Endothelial cell of umbilical vein (primary cell): ENCODE measurements at regions of chr16 and their contacts with region 1.

Region 1: GRCh38 chr16:86823895-86824671 is 245.7 kb downstream of the FOXL1 start:
- DNase-seq: peak; percentile 87
- H3K4me3 ChIP-seq: peak overlapping the region in 1 of 3 experiments; percentile 7
- H3K27ac ChIP-seq: peak overlapping the region; percentile 93
- H3K4me1 ChIP-seq: peaks cover 50% of the 10 kb centered on the region
- H3K27me3 ChIP-seq: no peaks in the 10 kb centered on the region
- CTCF ChIP-seq: no peak
- POLR2A ChIP-seq: peak; percentile 50

Region 2: GRCh38 chr16:86653285-86654006 is 170.6 kb before region 1 on chr16:
- CTCF ChIA-PET with region 1: no interaction called
- POLR2A ChIA-PET with region 1: no interaction called
- dilution Hi-C with region 1: no loop called
- intact Hi-C with region 1: no loop called
- DNase-seq: no peak
- H3K4me3 ChIP-seq: no peak overlapping the region
- H3K27ac ChIP-seq: no peak overlapping the region
- H3K4me1 ChIP-seq: no peaks in the 10 kb centered on the region
- H3K27me3 ChIP-seq: no peaks in the 10 kb centered on the region
- CTCF ChIP-seq: no peak
- POLR2A ChIP-seq: no peak

Region 3: DNA sequence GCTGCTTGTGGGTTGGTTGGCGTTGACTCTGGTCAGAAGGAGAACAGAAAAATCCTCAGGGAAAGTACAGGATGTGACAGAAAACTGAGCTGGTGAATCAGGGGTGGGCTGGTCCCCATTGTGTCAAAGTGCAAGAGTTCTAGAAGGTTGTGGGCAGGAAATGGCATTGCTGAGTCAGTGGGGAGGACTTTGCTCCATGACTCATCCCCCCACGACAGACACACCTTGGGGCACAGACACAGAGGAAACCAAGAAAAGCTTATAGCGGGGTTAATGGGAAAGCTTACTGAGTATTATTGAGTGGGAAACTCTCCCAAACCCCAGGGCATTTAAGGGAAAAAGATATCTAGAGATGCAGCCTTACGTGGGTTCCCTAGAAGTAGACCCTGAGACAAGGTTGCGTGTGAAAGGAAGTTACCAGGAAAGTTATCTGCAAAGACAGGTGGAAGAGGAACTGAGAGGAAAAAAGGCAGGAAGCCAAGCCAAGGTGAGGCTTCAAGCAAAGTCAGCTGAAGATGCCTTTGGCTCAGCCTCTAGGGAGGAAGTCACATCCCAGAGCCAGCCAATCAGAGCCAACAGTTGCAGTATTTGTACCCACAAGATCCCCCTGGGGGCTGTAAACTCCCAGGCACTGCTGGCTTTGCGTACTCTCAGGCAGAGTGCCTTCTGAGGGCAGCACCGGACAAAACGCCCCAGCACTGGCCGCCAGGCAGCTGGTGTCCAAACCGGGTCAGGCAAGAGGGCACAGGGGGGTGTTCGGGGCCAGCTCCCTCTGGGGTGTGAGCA is 159.4 kb before region 1 on chr16:
- CTCF ChIA-PET with region 1: no interaction called
- POLR2A ChIA-PET with region 1: no interaction called
- dilution Hi-C with region 1: no loop called
- intact Hi-C with region 1: loop called (anchors 1 kb)
- DNase-seq: peak; percentile 94
- H3K4me3 ChIP-seq: no peak overlapping the region
- H3K27ac ChIP-seq: peak overlapping the region; percentile 95
- H3K4me1 ChIP-seq: peaks cover 60% of the 10 kb centered on the region
- H3K27me3 ChIP-seq: no peaks in the 10 kb centered on the region
- CTCF ChIP-seq: no peak
- POLR2A ChIP-seq: no peak

Region 4: GRCh38 chr16:86740906-86741799 is 82.9 kb before region 1 on chr16:
- CTCF ChIA-PET with region 1: no interaction called
- POLR2A ChIA-PET with region 1: no interaction called
- dilution Hi-C with region 1: no loop called
- intact Hi-C with region 1: loop called (anchors 1 kb)
- DNase-seq: peak; percentile 92
- H3K4me3 ChIP-seq: peak overlapping the region in 2 of 3 experiments; percentile 15 to 31
- H3K27ac ChIP-seq: peak overlapping the region; percentile 96
- H3K4me1 ChIP-seq: peaks cover 19% of the 10 kb centered on the region
- H3K27me3 ChIP-seq: no peaks in the 10 kb centered on the region
- CTCF ChIP-seq: no peak
- POLR2A ChIP-seq: peak; percentile 75

Region 5: GRCh38 chr16:86761111-86762031 is 62.7 kb before region 1 on chr16:
- CTCF ChIA-PET with region 1: interaction called, 6 read pairs
- POLR2A ChIA-PET with region 1: no interaction called
- dilution Hi-C with region 1: no loop called
- intact Hi-C with region 1: loop called (anchors 5 kb)
- DNase-seq: peak; percentile 72
- H3K4me3 ChIP-seq: no peak overlapping the region
- H3K27ac ChIP-seq: no peak overlapping the region
- H3K4me1 ChIP-seq: peaks cover 13% of the 10 kb centered on the region
- H3K27me3 ChIP-seq: peaks cover 0 to 8% of the 10 kb centered on the region in 2 experiments
- CTCF ChIP-seq: peak; percentile 91 to 96
- POLR2A ChIP-seq: no peak

Region 6: GRCh38 chr16:86797700-86798099 is 26.4 kb before region 1 on chr16:
- CTCF ChIA-PET with region 1: no interaction called
- POLR2A ChIA-PET with region 1: no interaction called
- dilution Hi-C with region 1: no loop called
- intact Hi-C with region 1: loop called (anchors 2 kb)
- DNase-seq: no peak
- H3K4me3 ChIP-seq: no peak overlapping the region
- H3K27ac ChIP-seq: no peak overlapping the region
- H3K4me1 ChIP-seq: peaks cover 12% of the 10 kb centered on the region
- H3K27me3 ChIP-seq: peaks cover 4 to 10% of the 10 kb centered on the region in 2 experiments
- CTCF ChIP-seq: no peak
- POLR2A ChIP-seq: no peak

Region 7: GRCh38 chr16:86834451-86835035 is 10.5 kb after region 1 on chr16:
- CTCF ChIA-PET with region 1: interaction called, 4 read pairs
- POLR2A ChIA-PET with region 1: no interaction called
- dilution Hi-C with region 1: no loop called
- intact Hi-C with region 1: loop called (anchors 1 kb)
- DNase-seq: peak; percentile 41
- H3K4me3 ChIP-seq: no peak overlapping the region
- H3K27ac ChIP-seq: no peak overlapping the region
- H3K4me1 ChIP-seq: peaks cover 7% of the 10 kb centered on the region
- H3K27me3 ChIP-seq: no peaks in the 10 kb centered on the region
- CTCF ChIP-seq: peak in 1 of 2 donors; percentile 29
- POLR2A ChIP-seq: no peak